PC-9 (cell line): ENCODE measurements at regions of chr17 and their contacts with region 1.

Region 1: DNA sequence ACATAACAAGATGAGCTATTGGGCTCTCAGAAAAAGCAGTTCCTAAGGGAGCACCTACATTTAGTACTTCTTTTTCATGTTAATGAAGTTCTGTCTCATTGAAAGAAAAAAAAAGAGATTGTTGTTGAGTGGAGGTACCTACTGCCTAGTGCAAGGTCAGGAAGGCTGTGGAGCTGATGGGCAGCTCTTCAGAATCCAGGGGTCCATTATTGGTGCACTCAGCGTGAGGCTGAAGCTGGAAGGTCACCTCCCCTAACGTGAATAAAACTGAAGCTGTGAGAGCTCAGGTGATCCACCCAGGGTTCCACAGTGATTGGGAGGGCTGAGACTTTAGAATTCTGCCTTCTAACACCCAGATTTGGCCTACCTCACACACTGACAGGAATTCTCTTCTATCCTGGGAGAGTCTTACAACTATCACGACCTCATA is 153.9 kb upstream of the TBX2 start:
- DNase-seq: no peak
- H3K4me3 ChIP-seq: no peak overlapping the region
- H3K27ac ChIP-seq: no peak overlapping the region
- H3K4me1 ChIP-seq: no peaks in the 10 kb centered on the region
- H3K27me3 ChIP-seq: no peaks in the 10 kb centered on the region
- CTCF ChIP-seq: no peak

Region 2: DNA sequence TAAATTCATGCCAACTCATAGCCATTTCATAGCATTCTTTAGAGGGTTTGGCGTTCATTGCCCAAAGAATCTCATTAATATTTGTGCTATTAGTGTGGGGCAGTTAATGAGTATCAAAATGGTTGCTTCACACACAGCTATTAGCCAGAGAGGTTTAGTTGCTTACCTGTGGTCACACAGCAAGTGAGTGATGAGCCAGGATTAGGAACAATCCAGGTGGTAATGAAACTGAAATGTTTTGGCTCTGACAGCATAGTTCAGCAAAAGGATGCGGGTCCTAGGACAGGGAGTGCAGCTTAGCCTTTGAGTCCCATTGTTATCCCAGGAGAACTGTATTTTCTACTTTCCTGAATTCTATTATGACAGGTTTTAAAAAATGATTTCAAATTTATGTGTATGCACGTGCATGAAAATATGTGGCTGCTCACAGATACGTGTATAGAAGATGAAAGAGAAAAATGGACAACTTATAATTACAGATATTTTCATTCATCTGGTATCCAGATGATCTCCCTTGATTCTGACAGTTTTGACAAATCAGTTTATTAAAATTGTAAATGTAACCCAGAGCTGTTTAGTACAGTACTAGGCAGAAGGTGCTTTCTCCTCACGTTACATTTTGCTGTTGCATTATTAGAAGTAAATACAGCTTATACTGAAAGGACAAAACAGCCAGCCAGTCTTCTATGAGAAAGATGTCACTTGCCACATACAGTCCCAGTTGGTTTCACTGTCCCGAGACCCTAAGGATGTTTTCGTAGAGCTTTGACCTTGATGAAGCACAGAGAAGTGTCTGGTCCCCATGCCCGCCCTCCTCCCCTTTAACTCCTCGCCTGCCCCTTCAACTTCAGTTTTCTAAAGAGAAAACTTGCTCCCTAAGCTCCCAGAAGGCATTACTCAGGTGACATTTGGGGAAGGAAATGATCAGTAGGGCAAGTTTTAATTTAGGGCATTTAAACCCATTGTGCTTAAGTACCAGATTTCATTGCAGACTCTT is 54.1 kb after region 1 on chr17:
- CTCF ChIA-PET with region 1: interaction called, 10 read pairs
- POLR2A ChIA-PET with region 1: no interaction called
- intact Hi-C with region 1: no loop called
- DNase-seq: no peak
- H3K4me3 ChIP-seq: no peak overlapping the region
- H3K27ac ChIP-seq: no peak overlapping the region
- H3K4me1 ChIP-seq: no peaks in the 10 kb centered on the region
- H3K27me3 ChIP-seq: no peaks in the 10 kb centered on the region
- CTCF ChIP-seq: no peak

Region 3: GRCh38 chr17:61383689-61384201 is 138.0 kb after region 1 on chr17:
- CTCF ChIA-PET with region 1: no interaction called
- POLR2A ChIA-PET with region 1: no interaction called
- intact Hi-C with region 1: no loop called
- DNase-seq: no peak
- H3K4me3 ChIP-seq: no peak overlapping the region
- H3K27ac ChIP-seq: no peak overlapping the region
- H3K4me1 ChIP-seq: no peaks in the 10 kb centered on the region
- H3K27me3 ChIP-seq: no peaks in the 10 kb centered on the region
- CTCF ChIP-seq: no peak